ENCODE measurements at regions of chr14 and their contacts with region 1.

Region 1: DNA sequence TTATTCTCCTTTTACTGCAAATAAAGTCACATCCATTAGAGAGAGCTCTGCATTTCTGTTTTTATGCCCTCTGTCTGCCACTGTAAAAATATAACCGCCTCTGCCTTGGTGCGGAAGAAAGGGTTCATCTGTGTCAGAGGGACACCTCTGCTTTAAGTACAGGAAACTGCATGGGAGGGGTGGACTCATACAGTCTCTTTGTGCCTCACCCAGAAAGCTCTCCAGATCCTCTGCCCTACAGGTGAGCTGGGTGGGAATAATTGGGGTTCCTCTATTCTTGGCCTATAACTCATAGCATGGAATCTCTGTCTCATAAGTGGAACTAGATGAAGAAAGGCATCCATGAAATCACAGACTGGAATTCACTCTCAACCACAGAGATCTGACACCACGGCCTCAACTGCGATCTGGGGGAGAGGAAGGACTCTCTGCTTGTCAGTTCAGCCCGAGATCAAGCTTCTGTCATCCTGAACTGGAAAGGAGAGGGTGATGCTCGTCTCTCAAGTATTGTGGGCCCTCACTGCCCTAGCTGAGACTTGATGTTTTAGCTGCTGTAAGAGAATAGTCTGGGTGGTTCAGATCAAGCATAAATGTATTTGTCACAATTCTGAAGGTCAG is 702.3 kb downstream of the TMEM121 start:
- DNase-seq: peak; percentile 42 to 62 (median 53)
- H3K4me3 ChIP-seq: peak overlapping the region; percentile 6 to 28
- H3K4me3 Mint-ChIP-seq: peak overlapping the region; percentile 68 to 90 (median 85)
- H3K27ac ChIP-seq: peak overlapping the region; percentile 47
- H3K27ac Mint-ChIP-seq: peak overlapping the region; percentile 68 to 96 (median 93)
- H3K4me1 ChIP-seq: peaks cover 44% of the 10 kb centered on the region
- H3K4me1 Mint-ChIP-seq: peaks cover 24 to 63% (median 47%) of the 10 kb centered on the region in 4 donors
- H3K27me3 ChIP-seq: no peaks in the 10 kb centered on the region
- H3K27me3 Mint-ChIP-seq: peaks cover 0 to 3% of the 10 kb centered on the region in 2 donors

Region 2: GRCh38 chr14:105989566-105990302 is 238.9 kb before region 1 on chr14:
- CTCF ChIA-PET with region 1: no interaction called
- POLR2A ChIA-PET with region 1: no interaction called
- intact Hi-C with region 1: no loop called
- DNase-seq: peak in 1 of 5 donors; percentile 57
- H3K4me3 ChIP-seq: no peak overlapping the region
- H3K4me3 Mint-ChIP-seq: no peak overlapping the region
- H3K27ac ChIP-seq: no peak overlapping the region
- H3K27ac Mint-ChIP-seq: peak overlapping the region in 6 of 7 donors; percentile 29 to 65 (median 42)
- H3K4me1 ChIP-seq: peaks cover 50% of the 10 kb centered on the region
- H3K4me1 Mint-ChIP-seq: peaks cover 32 to 56% (median 45%) of the 10 kb centered on the region in 4 donors
- H3K27me3 ChIP-seq: no peaks in the 10 kb centered on the region
- H3K27me3 Mint-ChIP-seq: no peaks in the 10 kb centered on the region

Region 3: DNA sequence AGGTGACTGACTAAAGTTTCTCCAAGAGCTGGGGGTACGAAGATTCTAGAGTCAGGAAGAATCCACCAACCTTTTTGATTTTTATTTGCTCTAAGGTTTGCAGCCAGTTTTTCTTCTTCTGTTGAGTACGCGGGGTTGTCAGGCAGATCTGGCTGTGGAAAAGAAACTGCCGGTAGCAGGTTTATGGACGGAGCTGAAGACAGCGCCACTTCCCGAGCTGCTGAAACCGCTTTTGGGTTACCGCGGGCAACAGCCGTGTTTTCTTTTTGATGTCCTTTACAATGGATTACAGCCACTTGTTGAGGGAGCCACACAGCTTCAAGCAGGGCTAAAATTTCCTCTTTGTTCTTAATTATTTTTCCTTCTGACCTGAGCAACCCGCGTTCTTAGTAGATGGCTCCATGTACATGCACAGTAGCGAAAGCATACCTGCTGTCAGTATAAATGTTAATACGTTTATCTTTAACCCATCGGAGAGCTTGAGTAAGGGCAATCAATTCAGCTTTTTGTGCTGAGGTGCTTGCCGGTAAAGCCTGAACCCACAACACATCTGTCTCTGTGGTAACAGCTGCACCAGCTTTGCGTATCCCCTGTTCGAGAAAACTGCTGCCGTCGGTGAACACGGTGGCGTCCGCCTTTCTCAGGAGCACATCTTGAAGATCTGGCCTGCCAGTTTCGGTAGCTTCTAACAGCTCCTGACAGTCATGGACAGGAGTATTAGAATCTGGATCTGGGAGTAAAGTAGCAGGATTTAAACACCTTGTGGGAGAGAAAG is 27.9 kb before region 1 on chr14:
- CTCF ChIA-PET with region 1: interaction called, 15 read pairs
- POLR2A ChIA-PET with region 1: interaction called, 3 read pairs
- intact Hi-C with region 1: no loop called
- DNase-seq: peak in 1 of 5 donors; percentile 12
- H3K4me3 ChIP-seq: no peak overlapping the region
- H3K4me3 Mint-ChIP-seq: peak overlapping the region; percentile 44 to 81 (median 64)
- H3K27ac ChIP-seq: no peak overlapping the region
- H3K27ac Mint-ChIP-seq: peak overlapping the region in 3 of 7 donors; percentile 8 to 38 (median 9)
- H3K4me1 ChIP-seq: peaks cover 10% of the 10 kb centered on the region
- H3K4me1 Mint-ChIP-seq: peaks cover 3 to 13% (median 11%) of the 10 kb centered on the region in 4 donors
- H3K27me3 ChIP-seq: peaks cover 4% of the 10 kb centered on the region
- H3K27me3 Mint-ChIP-seq: peaks cover 26 to 53% of the 10 kb centered on the region in 2 donors